H1 (cell line): ENCODE measurements at regions of chr14 and their contacts with region 1.

Region 1: DNA sequence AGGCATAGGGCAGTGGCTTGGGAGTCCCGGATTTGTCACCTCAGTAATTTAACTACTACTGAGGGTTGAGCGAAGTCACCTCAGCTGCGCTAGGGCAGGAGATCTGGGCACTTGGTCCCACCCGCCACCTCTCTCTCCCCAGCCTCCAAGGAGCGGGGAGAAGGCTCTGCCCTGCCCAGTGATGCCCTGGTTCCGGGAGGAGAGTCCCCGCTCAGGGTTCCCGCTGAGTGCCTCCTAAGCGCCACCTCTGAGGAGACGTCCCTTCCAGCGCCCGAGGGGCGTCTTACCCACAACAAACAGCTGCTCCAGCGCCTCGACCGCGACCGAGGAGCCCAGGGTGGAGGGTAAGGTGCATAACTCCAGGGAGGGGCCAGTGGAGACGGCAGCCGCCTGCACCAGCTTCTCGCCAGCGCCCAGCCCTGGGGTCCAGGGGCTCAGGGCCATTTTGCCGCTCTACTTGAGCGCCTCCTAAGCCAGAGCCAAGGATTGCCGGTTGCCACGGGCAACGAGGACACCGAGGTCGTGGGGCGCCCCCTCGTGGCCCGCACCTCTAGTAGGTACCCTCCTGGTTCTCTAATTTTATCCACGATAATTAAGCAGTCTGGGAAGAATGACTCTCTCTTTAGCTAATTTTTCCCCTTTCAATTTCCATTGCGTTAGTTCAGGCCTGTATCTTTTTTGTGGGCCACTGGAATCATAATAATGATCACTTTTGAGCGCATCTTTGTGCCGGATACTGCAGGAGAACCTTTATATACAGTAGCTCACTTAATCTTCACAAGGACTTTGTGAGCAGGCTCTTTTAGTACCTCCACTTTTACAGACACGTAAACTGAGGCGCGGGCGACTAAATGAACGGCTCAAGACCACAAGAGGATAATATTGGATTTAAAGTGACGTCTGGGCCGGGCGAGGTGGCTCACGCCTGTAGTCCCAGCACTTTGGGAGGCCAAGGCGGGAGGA is at the start of gene CCDC175:
- DNase-seq: peak; percentile 83 to 93
- H3K4me3 ChIP-seq: peak within 1 kb of the TSS; percentile 64 to 80 (median 78)
- H3K27ac ChIP-seq: no peak within 1 kb of the TSS; the same call in 1 of the 2 replicates
- H3K4me1 ChIP-seq: no peaks in the 10 kb centered on the region
- H3K27me3 ChIP-seq: no peaks in the 10 kb centered on the region
- CTCF ChIP-seq: peak; percentile 88 to 99 (median 89)
- EP300 ChIP-seq: no peak
- POLR2A ChIP-seq: peak in 1 of 2 experiments; percentile 42; a peak in 1 of 3 replicates
- RAD21 ChIP-seq: peak; percentile 90 to 91
- total RNA-seq, gene CCDC175: 0.19 TPM in 1 of 2 replicates, not detected in the other

Region 2: GRCh38 chr14:59500732-59501131 is 75.9 kb before region 1 on chr14:
- CTCF ChIA-PET with region 1: interaction called, 462 read pairs
- POLR2A ChIA-PET with region 1: no interaction called
- DNase-seq: no peak
- H3K4me3 ChIP-seq: no peak overlapping the region
- H3K27ac ChIP-seq: no peak overlapping the region
- H3K4me1 ChIP-seq: no peaks in the 10 kb centered on the region
- H3K27me3 ChIP-seq: no peaks in the 10 kb centered on the region
- CTCF ChIP-seq: no peak
- EP300 ChIP-seq: no peak
- POLR2A ChIP-seq: no peak
- RAD21 ChIP-seq: no peak

Region 3: GRCh38 chr14:59520224-59520623 is 56.4 kb before region 1 on chr14:
- CTCF ChIA-PET with region 1: interaction called, 462 read pairs
- POLR2A ChIA-PET with region 1: no interaction called
- DNase-seq: no peak
- H3K4me3 ChIP-seq: no peak overlapping the region
- H3K27ac ChIP-seq: no peak overlapping the region
- H3K4me1 ChIP-seq: no peaks in the 10 kb centered on the region
- H3K27me3 ChIP-seq: no peaks in the 10 kb centered on the region
- CTCF ChIP-seq: no peak
- EP300 ChIP-seq: no peak
- POLR2A ChIP-seq: no peak
- RAD21 ChIP-seq: no peak

Region 4: GRCh38 chr14:59560314-59560713 is 16.3 kb before region 1 on chr14:
- CTCF ChIA-PET with region 1: interaction called, 44 read pairs
- POLR2A ChIA-PET with region 1: no interaction called
- DNase-seq: no peak
- H3K4me3 ChIP-seq: no peak overlapping the region
- H3K27ac ChIP-seq: no peak overlapping the region
- H3K4me1 ChIP-seq: peaks cover 0 to 7% (median 4%) of the 10 kb centered on the region in 4 experiments; a peak in 2 of 7 replicates
- H3K27me3 ChIP-seq: no peaks in the 10 kb centered on the region
- CTCF ChIP-seq: no peak
- EP300 ChIP-seq: no peak
- POLR2A ChIP-seq: no peak
- RAD21 ChIP-seq: no peak

Region 5: GRCh38 chr14:59600211-59600945 is 23.8 kb after region 1 on chr14:
- CTCF ChIA-PET with region 1: interaction called, 10 read pairs
- POLR2A ChIA-PET with region 1: no interaction called
- DNase-seq: no peak
- H3K4me3 ChIP-seq: no peak overlapping the region
- H3K27ac ChIP-seq: no peak overlapping the region
- H3K4me1 ChIP-seq: no peaks in the 10 kb centered on the region
- H3K27me3 ChIP-seq: no peaks in the 10 kb centered on the region
- CTCF ChIP-seq: no peak
- EP300 ChIP-seq: no peak
- POLR2A ChIP-seq: no peak
- RAD21 ChIP-seq: no peak

Region 6: DNA sequence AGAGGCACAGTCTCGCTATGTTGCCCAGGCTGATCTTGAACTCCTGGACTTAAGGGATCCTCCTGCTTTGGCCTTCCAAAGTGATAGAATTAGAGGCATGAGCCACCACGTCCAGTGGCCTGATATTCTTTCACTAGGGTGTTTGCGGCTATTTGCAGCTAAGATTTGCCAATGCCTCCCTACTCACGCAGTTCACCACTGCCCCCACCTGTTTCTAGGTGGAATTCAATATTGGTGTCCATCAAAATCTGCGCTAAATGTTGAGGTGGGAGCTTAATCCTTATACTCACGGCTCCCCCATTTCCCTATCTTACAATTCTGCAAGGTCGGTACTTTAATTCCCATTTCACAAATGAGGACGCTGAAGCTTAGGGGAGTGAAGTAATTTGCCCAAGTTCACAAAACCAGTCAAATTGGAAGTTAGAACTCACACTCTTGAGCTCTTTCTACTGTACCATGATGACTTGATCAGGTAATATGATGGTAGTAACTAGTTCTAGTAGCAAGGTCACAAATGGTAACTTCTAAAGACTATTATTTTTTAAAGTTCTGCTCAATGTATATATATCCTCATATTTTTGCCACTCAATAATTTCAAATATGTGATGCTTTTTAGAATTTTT is 321.3 kb after region 1 on chr14:
- CTCF ChIA-PET with region 1: interaction called, 14 read pairs
- POLR2A ChIA-PET with region 1: no interaction called
- DNase-seq: peak in 1 of 2 experiments; percentile 10
- H3K4me3 ChIP-seq: no peak overlapping the region
- H3K27ac ChIP-seq: no peak overlapping the region
- H3K4me1 ChIP-seq: no peaks in the 10 kb centered on the region
- H3K27me3 ChIP-seq: no peaks in the 10 kb centered on the region
- CTCF ChIP-seq: peak; percentile 52 to 81 (median 76)
- EP300 ChIP-seq: no peak
- POLR2A ChIP-seq: no peak
- RAD21 ChIP-seq: peak; percentile 92